Activated CD8-positive, alpha-beta memory T cell treated with anti-CD3 and anti-CD28 coated beads, Interleukin-2, amount 10 ng/mL, durations not matched to agents 7 days and 5 days (primary cell): ENCODE measurements at regions of chr11 and their contacts with region 1.

Region 1: DNA sequence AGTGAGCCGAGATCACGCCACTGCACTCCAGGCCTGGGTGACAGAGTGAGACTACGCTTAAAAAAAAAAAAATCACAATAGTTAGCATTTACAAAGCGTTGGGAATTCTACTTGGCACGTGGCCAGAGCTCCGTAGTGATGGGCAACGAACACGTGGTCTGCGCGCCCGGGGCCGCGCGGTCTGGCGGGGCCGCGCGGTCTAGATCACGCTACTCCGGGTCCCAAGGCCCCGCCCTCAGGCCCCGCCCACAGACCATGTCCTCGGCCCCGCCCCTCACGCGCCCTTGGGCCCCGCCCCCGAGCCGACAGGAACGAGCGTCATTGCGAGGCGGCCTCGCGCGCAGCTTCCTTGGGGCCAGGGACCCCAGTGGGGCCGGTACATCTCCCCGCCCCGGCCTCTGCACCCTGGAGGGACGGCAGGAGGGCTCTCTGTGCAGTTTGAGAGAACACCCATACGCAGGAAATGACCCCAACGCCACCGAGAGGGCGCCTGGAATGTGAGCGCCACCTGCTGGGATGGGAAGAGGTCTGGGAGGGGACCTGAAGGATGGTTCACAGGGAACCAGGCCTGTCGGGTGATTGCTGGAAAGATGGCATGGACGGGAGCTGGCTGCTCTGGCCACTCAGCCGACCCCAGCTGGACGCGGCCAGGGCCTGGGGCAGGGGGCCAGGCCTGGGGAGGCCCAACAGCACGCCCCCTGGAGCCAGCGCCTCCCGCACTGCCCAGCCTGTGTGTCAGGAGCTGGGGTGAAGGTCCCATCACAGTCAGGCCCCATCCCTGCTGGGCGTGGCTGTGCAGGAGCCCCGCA is 2.0 kb upstream of the PTDSS2 start:
- DNase-seq: peak; percentile 96
- ATAC-seq: peak; percentile 74
- H3K4me3 Mint-ChIP-seq: peak overlapping the region; percentile 90
- H3K27ac Mint-ChIP-seq: peak overlapping the region; percentile 98
- H3K4me1 Mint-ChIP-seq: peaks cover 27% of the 10 kb centered on the region
- H3K27me3 Mint-ChIP-seq: peaks cover 4% of the 10 kb centered on the region

Region 2: GRCh38 chr11:250740-251299 is 197.3 kb before region 1 on chr11:
- CTCF ChIA-PET with region 1: interaction called, 14 read pairs
- DNase-seq: peak; percentile 83
- ATAC-seq: peak; percentile 97
- H3K4me3 Mint-ChIP-seq: no peak overlapping the region
- H3K27ac Mint-ChIP-seq: peak overlapping the region; percentile 49
- H3K4me1 Mint-ChIP-seq: peaks cover 12% of the 10 kb centered on the region
- H3K27me3 Mint-ChIP-seq: no peaks in the 10 kb centered on the region

Region 3: GRCh38 chr11:316031-316701 is 132.0 kb before region 1 on chr11:
- CTCF ChIA-PET with region 1: interaction called, 10 read pairs
- DNase-seq: peak; percentile 77
- ATAC-seq: no peak
- H3K4me3 Mint-ChIP-seq: peak overlapping the region; percentile 97
- H3K27ac Mint-ChIP-seq: peak overlapping the region; percentile 91
- H3K4me1 Mint-ChIP-seq: peaks cover 46% of the 10 kb centered on the region
- H3K27me3 Mint-ChIP-seq: no peaks in the 10 kb centered on the region

Region 4: GRCh38 chr11:396948-397548 is 51.1 kb before region 1 on chr11:
- CTCF ChIA-PET with region 1: interaction called, 24 read pairs
- DNase-seq: peak; percentile 74
- ATAC-seq: peak; percentile 86
- H3K4me3 Mint-ChIP-seq: no peak overlapping the region
- H3K27ac Mint-ChIP-seq: no peak overlapping the region
- H3K4me1 Mint-ChIP-seq: no peaks in the 10 kb centered on the region
- H3K27me3 Mint-ChIP-seq: no peaks in the 10 kb centered on the region

Region 5: DNA sequence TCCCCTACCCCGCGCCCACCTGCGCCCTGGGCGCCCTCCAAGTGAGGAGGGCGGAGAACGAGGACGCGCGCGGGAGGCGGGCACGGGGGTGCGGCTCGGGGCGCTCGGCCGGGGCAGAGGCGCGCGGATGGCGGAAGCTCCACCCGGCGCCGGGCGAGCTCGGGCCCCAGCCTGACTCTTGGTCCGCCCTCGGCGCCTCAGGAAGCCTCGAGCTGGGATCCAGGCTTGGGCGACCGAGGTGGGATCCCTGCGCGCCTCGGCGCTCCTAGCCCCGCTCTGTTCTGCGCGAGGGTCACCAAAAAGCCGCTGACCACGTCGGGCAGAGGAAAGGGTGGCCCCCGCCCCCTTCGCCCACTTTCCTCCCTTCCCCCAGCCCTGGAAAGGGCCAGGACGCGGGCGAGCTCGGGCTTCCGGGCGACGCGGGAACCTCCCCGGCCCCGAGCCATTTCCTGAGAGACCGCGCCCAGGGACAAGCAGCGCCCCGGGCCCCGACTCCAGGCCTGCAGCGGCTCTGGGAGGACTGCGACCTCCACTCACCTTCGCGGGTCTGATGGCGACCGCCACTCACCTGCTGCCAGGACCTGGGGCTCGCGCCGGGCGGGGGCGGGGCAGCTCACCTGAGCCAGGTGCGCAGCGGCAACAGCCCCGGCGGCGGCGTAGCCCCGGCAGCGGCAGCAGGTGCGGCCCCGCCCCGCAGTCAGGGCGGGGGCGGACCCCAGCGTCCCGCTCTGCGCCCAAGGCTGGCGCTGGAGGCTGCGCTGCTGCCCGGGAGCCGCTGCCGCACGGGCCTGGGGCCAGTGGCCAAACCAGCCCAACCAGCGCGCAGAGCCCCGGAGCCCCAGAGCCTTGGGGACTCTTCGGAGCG is 31.1 kb before region 1 on chr11:
- CTCF ChIA-PET with region 1: interaction called, 74 read pairs
- DNase-seq: peak; percentile 73
- ATAC-seq: peak; percentile 57
- H3K4me3 Mint-ChIP-seq: peak overlapping the region; percentile 94
- H3K27ac Mint-ChIP-seq: peak overlapping the region; percentile 90
- H3K4me1 Mint-ChIP-seq: peaks cover 19% of the 10 kb centered on the region
- H3K27me3 Mint-ChIP-seq: no peaks in the 10 kb centered on the region

Region 6: GRCh38 chr11:468493-468892 is 20.4 kb after region 1 on chr11:
- CTCF ChIA-PET with region 1: no interaction called
- DNase-seq: no peak
- ATAC-seq: no peak
- H3K4me3 Mint-ChIP-seq: no peak overlapping the region
- H3K27ac Mint-ChIP-seq: no peak overlapping the region
- H3K4me1 Mint-ChIP-seq: no peaks in the 10 kb centered on the region
- H3K27me3 Mint-ChIP-seq: no peaks in the 10 kb centered on the region

Region 7: GRCh38 chr11:506238-506994 is 58.3 kb after region 1 on chr11:
- CTCF ChIA-PET with region 1: interaction called, 33 read pairs
- DNase-seq: peak; percentile 98
- ATAC-seq: peak; percentile 80
- H3K4me3 Mint-ChIP-seq: peak overlapping the region; percentile 88
- H3K27ac Mint-ChIP-seq: peak overlapping the region; percentile 96
- H3K4me1 Mint-ChIP-seq: peaks cover 35% of the 10 kb centered on the region
- H3K27me3 Mint-ChIP-seq: no peaks in the 10 kb centered on the region

Region 8: GRCh38 chr11:575996-576768 is 128.1 kb after region 1 on chr11 and contains the start of gene PHRF1:
- CTCF ChIA-PET with region 1: no interaction called
- DNase-seq: peak; percentile 96
- ATAC-seq: peak; percentile 87
- H3K4me3 Mint-ChIP-seq: peak within 1 kb of the TSS; percentile 85
- H3K27ac Mint-ChIP-seq: peak within 1 kb of the TSS; percentile 98
- H3K4me1 Mint-ChIP-seq: peaks cover 47% of the 10 kb centered on the region
- H3K27me3 Mint-ChIP-seq: peaks cover 21% of the 10 kb centered on the region
- total RNA-seq, gene PHRF1: 60.2 to 62.0 TPM